ENCODE measurements at regions of chr4 and their contacts with region 1.

Region 1: GRCh38 chr4:147866532-147867271 is 134.8 kb downstream of the ARHGAP10 start:
- DNase-seq: peak; percentile 26
- H3K4me3 ChIP-seq: no peak overlapping the region
- H3K27ac ChIP-seq: peak overlapping the region in 3 of 4 donors; percentile 28 to 78 (median 35)
- H3K4me1 ChIP-seq: peaks cover 0 to 50% (median 12%) of the 10 kb centered on the region in 3 donors
- H3K27me3 ChIP-seq: no peaks in the 10 kb centered on the region
- CTCF ChIP-seq: peak; percentile 97 to 100 (median 100)
- POLR2A ChIP-seq: no peak

Region 2: DNA sequence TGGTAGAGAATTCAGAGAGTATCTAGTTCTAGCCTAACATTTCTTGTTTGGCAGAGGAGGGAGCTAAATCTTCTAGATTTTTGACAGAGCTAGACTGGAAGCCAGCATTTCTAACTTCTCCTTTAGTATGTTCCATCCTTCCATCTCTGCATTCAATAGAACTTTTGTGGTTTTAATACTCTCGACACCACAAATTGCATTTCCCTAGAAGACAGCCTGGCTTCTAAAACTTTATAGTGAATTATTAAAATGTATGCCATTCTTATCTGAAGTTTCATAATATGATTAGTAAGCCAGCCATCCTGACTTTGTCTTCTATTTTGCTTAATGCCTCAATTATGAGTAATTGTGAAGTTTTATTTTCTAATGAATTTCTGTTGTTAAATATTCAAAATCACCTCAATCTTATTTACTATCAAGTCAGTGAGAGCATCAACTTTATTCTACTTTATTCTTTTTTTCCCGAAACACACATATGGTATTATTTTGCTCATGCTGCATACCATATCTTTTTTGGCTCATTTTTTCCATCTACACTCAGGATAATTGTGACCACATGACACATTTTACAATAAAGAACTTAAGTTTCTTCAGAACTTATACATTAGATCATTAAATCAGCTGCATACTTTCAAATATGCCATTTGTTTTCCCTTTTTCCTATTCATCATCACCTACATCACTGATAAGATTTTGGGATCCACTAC is 355.6 kb before region 1 on chr4:
- intact Hi-C with region 1: no loop called
- DNase-seq: no peak
- H3K4me3 ChIP-seq: no peak overlapping the region
- H3K27ac ChIP-seq: no peak overlapping the region
- H3K4me1 ChIP-seq: no peaks in the 10 kb centered on the region
- H3K27me3 ChIP-seq: no peaks in the 10 kb centered on the region
- CTCF ChIP-seq: no peak
- POLR2A ChIP-seq: no peak

Region 3: DNA sequence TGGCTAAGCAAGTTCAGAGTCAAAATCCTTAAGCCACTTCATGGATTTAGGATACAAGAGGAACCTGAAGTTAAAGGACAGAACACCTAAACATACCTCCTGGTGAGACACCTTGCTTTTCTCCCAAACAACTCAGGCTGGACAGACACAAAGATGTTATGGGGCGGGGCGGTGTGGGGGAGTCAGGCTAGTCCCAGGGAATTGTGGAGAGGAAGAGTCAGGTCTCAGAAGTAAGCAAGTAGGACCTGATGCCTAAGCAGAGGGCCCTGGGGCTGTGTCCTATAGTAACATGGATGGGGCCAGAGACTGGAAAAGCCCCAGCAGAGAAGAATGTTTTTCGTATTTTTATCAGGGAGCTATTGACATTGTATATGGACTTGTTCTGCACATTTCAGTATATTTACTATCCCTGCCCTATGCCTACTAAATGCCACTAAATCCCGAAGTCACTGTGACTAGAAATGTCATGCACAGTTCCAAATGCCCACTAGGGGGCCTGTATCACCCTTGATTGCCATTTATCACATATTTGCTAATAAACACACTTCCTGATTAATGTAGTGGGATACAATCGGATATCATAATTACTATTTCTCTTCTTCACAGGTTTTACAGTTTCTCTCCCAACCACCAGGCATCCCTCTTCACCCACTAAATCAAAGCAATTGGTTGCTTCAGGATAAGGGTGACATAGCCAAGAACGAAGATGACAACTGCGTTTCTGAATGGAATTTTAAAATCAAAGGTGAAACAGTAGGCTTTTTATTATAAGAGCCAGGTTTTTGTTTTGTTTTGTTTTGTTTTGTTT is 158.6 kb before region 1 on chr4:
- intact Hi-C with region 1: loop called (anchors 5 kb)
- DNase-seq: no peak
- H3K4me3 ChIP-seq: no peak overlapping the region
- H3K27ac ChIP-seq: peak overlapping the region in 1 of 4 donors; percentile 26
- H3K4me1 ChIP-seq: peaks cover 0 to 11% (median 6%) of the 10 kb centered on the region in 3 donors
- H3K27me3 ChIP-seq: no peaks in the 10 kb centered on the region
- CTCF ChIP-seq: peak; percentile 82 to 94 (median 87)
- POLR2A ChIP-seq: no peak

Region 4: GRCh38 chr4:147749811-147750321 is 116.8 kb before region 1 on chr4:
- intact Hi-C with region 1: no loop called
- DNase-seq: no peak
- H3K4me3 ChIP-seq: no peak overlapping the region
- H3K27ac ChIP-seq: no peak overlapping the region
- H3K4me1 ChIP-seq: peaks cover 0 to 54% (median 25%) of the 10 kb centered on the region in 3 donors
- H3K27me3 ChIP-seq: no peaks in the 10 kb centered on the region
- CTCF ChIP-seq: no peak
- POLR2A ChIP-seq: no peak

Measured in esophagus squamous epithelium (tissue), 5 donors.